ENCODE measurements at regions of chr6 and their contacts with region 1.

Region 1: DNA sequence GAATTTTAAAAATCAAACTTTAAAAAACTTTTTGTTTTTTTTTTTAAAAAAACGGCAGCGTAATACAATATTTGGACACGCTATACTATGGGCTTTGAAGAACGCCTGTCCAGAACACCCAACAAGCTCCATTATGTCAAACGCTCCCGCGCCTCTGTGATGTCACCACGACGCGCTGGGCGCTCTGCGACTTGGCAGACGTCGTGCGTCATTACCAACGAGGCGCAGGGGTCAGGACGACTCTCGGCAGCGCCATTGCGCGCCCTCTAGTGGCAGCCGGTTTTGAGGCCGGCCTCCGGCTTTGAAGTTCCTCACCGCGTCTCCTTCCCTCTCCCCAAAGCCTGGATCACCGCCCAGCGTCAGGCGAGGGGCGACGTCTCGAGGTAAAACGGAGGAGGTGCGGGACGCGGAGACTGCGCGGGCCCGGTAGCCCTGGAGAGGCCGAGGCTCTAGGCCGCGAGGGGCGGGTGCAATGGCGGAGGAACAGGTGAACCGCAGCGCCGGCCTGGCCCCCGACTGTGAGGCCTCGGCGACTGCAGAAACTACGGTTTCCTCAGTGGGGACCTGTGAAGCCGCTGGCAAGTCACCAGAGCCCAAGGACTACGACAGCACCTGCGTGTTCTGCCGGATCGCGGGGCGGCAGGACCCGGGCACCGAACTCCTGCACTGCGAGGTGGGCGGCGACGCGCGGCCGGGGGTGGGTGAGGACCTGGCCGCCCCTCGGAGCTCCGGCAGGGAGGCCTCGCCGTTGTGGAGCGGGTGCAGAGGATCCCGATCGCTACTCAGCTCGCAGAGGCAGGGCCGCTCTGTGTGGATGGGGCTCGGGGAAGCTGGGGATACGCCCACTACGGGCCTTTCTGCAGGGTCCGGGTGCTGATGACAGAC is at the start of gene HINT3:
- DNase-seq: peak; percentile 98
- ATAC-seq: peak; percentile 88
- H3K4me3 Mint-ChIP-seq: no peak within 1 kb of the TSS
- H3K27ac Mint-ChIP-seq: peak within 1 kb of the TSS; percentile 75
- H3K4me1 Mint-ChIP-seq: peaks cover 6% of the 10 kb centered on the region
- H3K27me3 Mint-ChIP-seq: peaks cover 7% of the 10 kb centered on the region
- total RNA-seq, gene HINT3: 10.6 to 10.8 TPM

Region 2: GRCh38 chr6:125779924-125780539 is 176.7 kb before region 1 on chr6:
- POLR2A ChIA-PET with region 1: interaction called, 25 read pairs
- DNase-seq: peak; percentile 87
- ATAC-seq: peak; percentile 79
- H3K4me3 Mint-ChIP-seq: no peak overlapping the region
- H3K27ac Mint-ChIP-seq: no peak overlapping the region
- H3K4me1 Mint-ChIP-seq: peaks cover 10% of the 10 kb centered on the region
- H3K27me3 Mint-ChIP-seq: peaks cover 23% of the 10 kb centered on the region

Region 3: GRCh38 chr6:125918681-125919566 is 37.8 kb before region 1 on chr6:
- POLR2A ChIA-PET with region 1: interaction called, 25 read pairs
- DNase-seq: no peak
- ATAC-seq: peak; percentile 97
- H3K4me3 Mint-ChIP-seq: peak overlapping the region; percentile 92
- H3K27ac Mint-ChIP-seq: peak overlapping the region; percentile 93
- H3K4me1 Mint-ChIP-seq: peaks cover 33% of the 10 kb centered on the region
- H3K27me3 Mint-ChIP-seq: no peaks in the 10 kb centered on the region